ENCODE measurements at regions of chr12 and their contacts with region 1.

Region 1: DNA sequence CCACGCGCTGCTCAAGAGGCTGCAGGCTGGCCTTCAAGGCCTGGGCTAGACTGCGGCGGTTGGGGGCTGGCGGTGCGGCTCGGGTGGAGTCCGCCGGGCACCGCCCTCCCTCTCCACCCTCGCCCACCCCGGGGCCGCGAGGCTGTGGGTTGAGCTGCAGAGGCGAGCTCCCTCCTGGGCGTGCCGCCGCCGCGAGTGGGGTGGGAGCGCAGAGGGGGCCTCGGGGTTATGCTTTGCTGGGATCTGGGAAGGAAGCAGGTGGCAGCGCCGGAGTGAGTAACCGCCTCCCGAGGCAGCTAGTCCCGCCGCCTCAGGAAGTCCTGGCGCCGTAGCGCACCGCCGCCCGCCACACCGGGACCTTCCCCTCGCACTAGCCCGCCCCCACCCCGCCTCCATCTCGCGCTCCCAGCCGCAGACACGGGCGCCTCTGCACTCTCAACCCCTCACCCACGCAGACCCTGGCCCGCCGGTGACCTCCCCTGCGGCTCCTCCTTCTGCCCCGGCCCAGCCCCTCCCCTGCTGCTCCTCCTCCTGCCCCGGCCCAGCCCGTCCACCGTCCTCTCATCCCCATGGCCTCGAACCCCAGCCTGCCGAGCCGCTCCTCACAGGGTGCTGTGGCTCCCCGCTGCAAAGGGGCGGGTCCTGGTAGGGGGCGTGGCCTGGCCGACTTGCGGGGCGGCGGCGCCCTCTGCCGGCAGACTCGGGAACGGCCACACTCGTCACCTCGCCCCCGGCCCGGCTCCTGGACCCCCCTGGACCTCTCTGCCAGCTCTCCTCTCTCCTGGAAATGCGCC is 16.6 kb downstream of the TAMALIN start:
- H3K4me3 ChIP-seq: peak overlapping the region; percentile 48
- H3K27ac ChIP-seq: no peak overlapping the region
- H3K4me1 ChIP-seq: peaks cover 2% of the 10 kb centered on the region
- CTCF ChIP-seq: peak; percentile 98

Region 2: DNA sequence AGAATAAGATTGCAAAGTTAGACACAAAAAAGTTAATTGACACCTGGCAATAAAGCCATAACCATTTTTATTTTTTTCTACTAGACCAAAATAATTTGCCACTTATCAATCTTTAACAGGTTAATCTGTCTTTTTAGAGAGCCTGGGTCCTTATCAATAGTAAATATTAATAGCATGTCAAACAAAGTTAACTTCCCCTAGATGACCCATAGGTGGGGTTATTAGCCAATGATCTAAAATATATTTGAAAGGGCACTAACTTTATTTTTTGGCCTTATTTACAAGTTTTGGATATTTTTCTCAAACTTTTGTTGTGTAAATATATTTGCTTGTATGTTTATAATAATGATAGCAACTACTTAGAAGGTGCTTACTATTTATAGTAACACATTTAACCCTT is 131.5 kb before region 1 on chr12:
- CTCF ChIA-PET with region 1: interaction called, 18 read pairs
- POLR2A ChIA-PET with region 1: interaction called, 3 read pairs
- H3K4me3 ChIP-seq: no peak overlapping the region
- H3K27ac ChIP-seq: no peak overlapping the region
- H3K4me1 ChIP-seq: no peaks in the 10 kb centered on the region
- CTCF ChIP-seq: no peak

Region 3: GRCh38 chr12:52004042-52004648 is 19.2 kb before region 1 on chr12:
- CTCF ChIA-PET with region 1: interaction called, 349 read pairs
- POLR2A ChIA-PET with region 1: interaction called, 11 read pairs
- H3K4me3 ChIP-seq: no peak overlapping the region
- H3K27ac ChIP-seq: no peak overlapping the region
- H3K4me1 ChIP-seq: peaks cover 2% of the 10 kb centered on the region; the same call in 1 of the 2 replicates
- CTCF ChIP-seq: peak; percentile 85

Region 4: GRCh38 chr12:52050761-52051541 is 27.6 kb after region 1 on chr12 and contains the start of gene NR4A1:
- CTCF ChIA-PET with region 1: interaction called, 794 read pairs
- POLR2A ChIA-PET with region 1: interaction called, 8 read pairs
- H3K4me3 ChIP-seq: peak within 1 kb of the TSS; percentile 43
- H3K27ac ChIP-seq: peak within 1 kb of the TSS; percentile 30
- H3K4me1 ChIP-seq: peaks cover 11% of the 10 kb centered on the region; the same call in 1 of the 2 replicates
- CTCF ChIP-seq: peak; percentile 84

Region 5: DNA sequence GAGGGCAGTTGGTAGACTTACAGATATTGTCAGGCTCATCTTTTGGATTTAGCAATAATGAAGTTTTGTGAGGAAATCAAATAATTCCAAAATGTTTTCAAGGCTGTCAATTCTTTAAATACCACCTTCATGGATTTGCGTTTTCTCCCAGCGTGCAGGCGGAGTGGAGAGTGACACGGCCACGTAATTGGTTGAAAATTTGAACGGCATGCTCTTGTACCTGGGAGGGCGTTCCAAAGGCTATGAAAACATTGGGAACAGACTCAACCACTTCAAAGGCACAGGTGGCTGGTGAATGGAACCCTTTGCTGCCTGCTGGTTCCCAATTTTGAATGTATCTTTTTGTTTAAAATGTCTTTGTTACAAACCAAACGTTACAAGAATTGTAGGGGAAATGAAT is 68.5 kb after region 1 on chr12:
- CTCF ChIA-PET with region 1: interaction called, 794 read pairs
- POLR2A ChIA-PET with region 1: interaction called, 3 read pairs
- H3K4me3 ChIP-seq: no peak overlapping the region
- H3K27ac ChIP-seq: no peak overlapping the region
- H3K4me1 ChIP-seq: no peaks in the 10 kb centered on the region
- CTCF ChIP-seq: no peak

Region 6: DNA sequence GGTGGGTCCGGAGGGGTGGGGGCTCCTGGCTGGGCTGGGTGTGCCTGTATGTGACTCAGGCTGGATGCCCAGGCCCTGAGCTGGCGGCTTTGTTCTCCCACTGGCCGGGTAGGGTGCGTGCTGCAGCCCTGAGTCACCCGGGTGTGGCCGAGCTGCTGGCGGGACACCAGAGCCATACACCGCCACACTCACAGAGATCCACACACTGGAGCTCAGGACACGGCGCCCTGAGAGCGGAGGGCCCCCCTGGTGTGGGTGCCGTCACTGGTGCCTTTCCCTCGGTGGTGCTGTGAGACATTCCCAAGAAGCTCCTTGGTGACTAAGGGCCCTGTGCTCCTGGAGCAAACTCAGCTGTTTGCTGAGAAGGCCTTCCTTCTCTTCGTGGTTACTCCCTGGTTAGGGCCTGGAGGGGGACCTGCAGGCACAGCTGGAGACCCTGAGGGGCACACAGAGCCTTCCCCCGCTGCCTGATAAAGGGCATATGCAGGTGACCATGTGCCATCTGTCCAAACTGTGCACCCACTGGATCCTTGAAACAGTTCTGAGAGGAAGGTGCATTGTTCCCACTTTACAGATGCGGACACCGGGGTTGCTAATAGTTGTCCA is 124.1 kb after region 1 on chr12:
- CTCF ChIA-PET with region 1: interaction called, 13 read pairs
- POLR2A ChIA-PET with region 1: no interaction called
- H3K4me3 ChIP-seq: no peak overlapping the region
- H3K27ac ChIP-seq: no peak overlapping the region
- H3K4me1 ChIP-seq: no peaks in the 10 kb centered on the region; the same call in 1 of the 2 replicates
- CTCF ChIP-seq: no peak

Region 7: GRCh38 chr12:52175371-52176350 is 152.3 kb after region 1 on chr12:
- CTCF ChIA-PET with region 1: no interaction called
- POLR2A ChIA-PET with region 1: no interaction called
- H3K4me3 ChIP-seq: no peak overlapping the region
- H3K27ac ChIP-seq: peak overlapping the region; percentile 60
- H3K4me1 ChIP-seq: no peaks in the 10 kb centered on the region
- CTCF ChIP-seq: no peak

Region 8: GRCh38 chr12:52522346-52523011 is 499.1 kb after region 1 on chr12:
- CTCF ChIA-PET with region 1: no interaction called
- POLR2A ChIA-PET with region 1: no interaction called
- H3K4me3 ChIP-seq: no peak overlapping the region
- H3K27ac ChIP-seq: no peak overlapping the region
- H3K4me1 ChIP-seq: no peaks in the 10 kb centered on the region
- CTCF ChIP-seq: no peak